ENCODE measurements at regions of chr2 and their contacts with region 1.

Region 1: GRCh38 chr2:73828818-73829570 is at the start of gene STAMBP:
- DNase-seq: peak; percentile 95
- ATAC-seq: peak; percentile 75
- H3K4me3 Mint-ChIP-seq: peak within 1 kb of the TSS; percentile 97
- H3K27ac Mint-ChIP-seq: peak within 1 kb of the TSS; percentile 98
- H3K4me1 Mint-ChIP-seq: peaks cover 53% of the 10 kb centered on the region
- H3K27me3 Mint-ChIP-seq: no peaks in the 10 kb centered on the region
- total RNA-seq, gene STAMBP: 104 to 111 TPM

Region 2: DNA sequence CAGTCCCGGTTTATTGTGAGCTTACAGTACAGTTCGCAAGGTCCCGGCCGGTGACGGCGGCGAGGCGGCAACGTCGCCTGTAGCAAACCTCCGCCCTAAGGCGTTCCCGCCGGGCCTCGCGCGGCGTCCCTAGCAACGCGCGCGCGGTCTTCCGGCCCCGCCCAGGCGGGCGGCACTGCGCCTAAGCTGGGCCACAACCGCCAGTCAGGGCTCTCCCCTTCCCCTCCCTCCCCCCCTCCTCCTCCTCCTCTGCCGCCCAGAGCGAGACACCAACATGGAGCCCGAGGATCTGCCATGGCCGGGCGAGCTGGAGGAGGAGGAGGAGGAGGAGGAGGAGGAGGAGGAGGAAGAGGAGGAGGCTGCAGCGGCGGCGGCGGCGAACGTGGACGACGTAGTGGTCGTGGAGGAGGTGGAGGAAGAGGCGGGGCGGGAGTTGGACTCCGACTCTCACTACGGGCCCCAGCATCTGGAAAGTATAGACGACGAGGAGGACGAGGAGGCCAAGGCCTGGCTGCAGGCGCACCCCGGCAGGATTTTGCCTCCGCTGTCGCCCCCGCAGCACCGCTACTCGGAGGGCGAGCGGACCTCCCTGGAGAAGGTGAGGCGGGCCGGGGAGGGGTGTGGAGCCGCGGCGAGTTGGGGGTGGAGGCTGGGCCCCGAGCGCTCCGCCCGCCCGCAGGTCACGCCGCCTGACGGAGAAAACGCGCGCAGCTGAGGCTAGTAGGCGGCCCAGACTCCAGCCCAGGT is 443.2 kb before region 1 on chr2 and contains the start of gene ALMS1:
- CTCF ChIA-PET with region 1: no interaction called
- POLR2A ChIA-PET with region 1: no interaction called
- intact Hi-C with region 1: loop called in 1 of 2 experiments (anchors 10 kb)
- DNase-seq: peak; percentile 94
- ATAC-seq: peak; percentile 89
- H3K4me3 Mint-ChIP-seq: peak within 1 kb of the TSS; percentile 91
- H3K27ac Mint-ChIP-seq: peak within 1 kb of the TSS; percentile 91
- H3K4me1 Mint-ChIP-seq: peaks cover 27% of the 10 kb centered on the region
- H3K27me3 Mint-ChIP-seq: no peaks in the 10 kb centered on the region
- total RNA-seq, gene ALMS1: 19.2 to 24.0 TPM

Region 3: DNA sequence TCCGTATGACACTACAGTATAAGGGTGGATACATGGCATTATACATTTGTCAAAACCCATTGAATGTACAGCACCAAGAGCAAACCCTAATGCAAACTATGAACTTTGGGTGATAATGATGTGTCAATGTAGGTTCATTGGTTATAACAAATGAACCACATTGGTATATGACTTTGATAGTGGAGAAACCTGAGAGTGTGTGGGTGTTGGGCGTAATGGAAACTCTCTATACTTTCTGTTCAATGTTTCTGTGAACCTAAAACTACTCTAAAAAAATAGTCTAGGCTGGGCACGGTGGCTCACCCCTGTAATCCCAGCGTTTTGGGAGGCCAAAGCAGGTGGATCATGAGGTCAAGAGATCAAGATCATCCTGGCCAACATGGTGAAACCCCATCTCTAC is 57.4 kb after region 1 on chr2:
- CTCF ChIA-PET with region 1: interaction called, 4 read pairs
- POLR2A ChIA-PET with region 1: no interaction called
- intact Hi-C with region 1: loop called in 1 of 2 experiments (anchors 1 kb)
- DNase-seq: peak; percentile 79
- ATAC-seq: peak; percentile 90
- H3K4me3 Mint-ChIP-seq: no peak overlapping the region
- H3K27ac Mint-ChIP-seq: peak overlapping the region; percentile 78
- H3K4me1 Mint-ChIP-seq: peaks cover 25% of the 10 kb centered on the region
- H3K27me3 Mint-ChIP-seq: peaks cover 6% of the 10 kb centered on the region

Region 4: GRCh38 chr2:73985308-73986084 is 156.5 kb after region 1 on chr2:
- CTCF ChIA-PET with region 1: interaction called, 15 read pairs
- POLR2A ChIA-PET with region 1: interaction called, 4 read pairs
- intact Hi-C with region 1: loop called (anchors 1 to 2 kb)
- DNase-seq: peak; percentile 83
- ATAC-seq: peak; percentile 47
- H3K4me3 Mint-ChIP-seq: peak overlapping the region; percentile 87
- H3K27ac Mint-ChIP-seq: peak overlapping the region; percentile 73
- H3K4me1 Mint-ChIP-seq: peaks cover 71% of the 10 kb centered on the region
- H3K27me3 Mint-ChIP-seq: no peaks in the 10 kb centered on the region

Region 5: GRCh38 chr2:74147727-74148456 is 318.9 kb after region 1 on chr2 and contains the start of gene BOLA3:
- CTCF ChIA-PET with region 1: interaction called, 155 read pairs
- POLR2A ChIA-PET with region 1: interaction called, 4 read pairs
- intact Hi-C with region 1: loop called (anchors 1 to 10 kb)
- DNase-seq: peak; percentile 94
- ATAC-seq: peak; percentile 94
- H3K4me3 Mint-ChIP-seq: no peak within 1 kb of the TSS
- H3K27ac Mint-ChIP-seq: no peak within 1 kb of the TSS
- H3K4me1 Mint-ChIP-seq: peaks cover 5% of the 10 kb centered on the region
- H3K27me3 Mint-ChIP-seq: no peaks in the 10 kb centered on the region
- total RNA-seq, gene BOLA3: 119 to 130 TPM

Region 6: DNA sequence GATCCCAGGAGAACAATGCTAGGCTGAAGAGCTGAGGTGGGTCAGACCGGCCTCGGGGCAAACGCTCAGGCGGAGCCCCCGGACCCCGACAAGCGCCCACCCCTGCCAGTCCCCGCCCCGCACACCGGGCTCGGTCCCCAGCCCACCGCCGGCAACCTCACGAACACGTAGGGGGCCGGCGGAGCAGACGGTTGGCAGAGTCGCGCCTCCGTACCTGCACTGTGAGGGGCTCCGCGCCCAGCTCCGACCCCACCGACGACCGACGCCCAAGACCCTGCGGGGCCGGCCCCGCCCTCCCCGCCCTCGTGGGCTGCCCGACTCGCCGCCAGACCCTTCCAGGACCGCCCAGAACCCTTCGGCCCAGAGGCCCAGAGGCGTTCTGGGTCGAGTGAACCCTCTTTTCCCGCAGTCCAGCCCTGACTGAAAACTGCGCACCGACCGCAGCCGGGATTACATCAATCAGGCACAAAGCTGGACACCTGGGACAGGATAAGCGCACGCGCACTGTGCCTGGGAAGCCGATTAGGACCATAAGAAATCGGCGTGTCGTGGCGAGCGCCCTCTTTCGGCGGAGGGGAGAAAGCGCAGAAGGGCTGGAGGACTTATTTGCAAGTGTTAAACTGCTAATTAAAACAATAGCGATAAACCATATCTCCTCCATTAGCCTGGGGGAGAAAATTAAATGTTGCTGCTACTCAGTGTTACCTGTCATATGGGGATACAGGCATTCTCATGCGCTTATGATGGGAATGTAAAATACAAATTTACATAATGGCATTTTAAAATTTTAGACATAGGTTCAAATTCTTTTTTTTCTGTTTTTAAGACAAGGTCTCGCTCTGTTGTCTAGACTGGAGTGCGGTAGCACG is 562.8 kb after region 1 on chr2:
- CTCF ChIA-PET with region 1: interaction called, 7 read pairs
- POLR2A ChIA-PET with region 1: no interaction called
- intact Hi-C with region 1: loop called (anchors 10 kb)
- DNase-seq: peak; percentile 98
- ATAC-seq: peak; percentile 78
- H3K4me3 Mint-ChIP-seq: peak overlapping the region; percentile 86
- H3K27ac Mint-ChIP-seq: peak overlapping the region; percentile 99
- H3K4me1 Mint-ChIP-seq: peaks cover 7% of the 10 kb centered on the region
- H3K27me3 Mint-ChIP-seq: no peaks in the 10 kb centered on the region